GM12878 (cell line): ENCODE measurements at regions of chr9 and their contacts with region 1.

Region 1: GRCh38 chr9:13427587-13427986 is 148.1 kb upstream of the MPDZ start:
- DNase-seq: no peak
- ATAC-seq: 0 out of 3 replicates have a peak, but pooled peaks have one; percentile 35
- H3K4me3 ChIP-seq: no peak overlapping the region
- H3K27ac ChIP-seq: no peak overlapping the region
- H3K4me1 ChIP-seq: no peaks in the 10 kb centered on the region
- H3K27me3 ChIP-seq: no peaks in the 10 kb centered on the region; a peak in 1 of 4 replicates
- CTCF ChIP-seq: peak; percentile 49 to 71 (median 50); a peak in 5 of 6 replicates
- EP300 ChIP-seq: no peak
- POLR2A ChIP-seq: no peak
- RAD21 ChIP-seq: peak; percentile 76

Region 2: GRCh38 chr9:12933957-12934356 is 493.6 kb before region 1 on chr9:
- CTCF ChIA-PET with region 1: no interaction called
- POLR2A ChIA-PET with region 1: no interaction called
- RAD21 ChIA-PET with region 1: no interaction called
- SMC1A ChIA-PET with region 1: no interaction called
- in situ Hi-C with region 1: no loop called
- intact Hi-C with region 1: no loop called
- DNase-seq: no peak
- ATAC-seq: no peak
- H3K4me3 ChIP-seq: no peak overlapping the region
- H3K27ac ChIP-seq: no peak overlapping the region
- H3K4me1 ChIP-seq: no peaks in the 10 kb centered on the region
- H3K27me3 ChIP-seq: no peaks in the 10 kb centered on the region
- CTCF ChIP-seq: no peak
- EP300 ChIP-seq: no peak
- POLR2A ChIP-seq: no peak
- RAD21 ChIP-seq: no peak

Region 3: DNA sequence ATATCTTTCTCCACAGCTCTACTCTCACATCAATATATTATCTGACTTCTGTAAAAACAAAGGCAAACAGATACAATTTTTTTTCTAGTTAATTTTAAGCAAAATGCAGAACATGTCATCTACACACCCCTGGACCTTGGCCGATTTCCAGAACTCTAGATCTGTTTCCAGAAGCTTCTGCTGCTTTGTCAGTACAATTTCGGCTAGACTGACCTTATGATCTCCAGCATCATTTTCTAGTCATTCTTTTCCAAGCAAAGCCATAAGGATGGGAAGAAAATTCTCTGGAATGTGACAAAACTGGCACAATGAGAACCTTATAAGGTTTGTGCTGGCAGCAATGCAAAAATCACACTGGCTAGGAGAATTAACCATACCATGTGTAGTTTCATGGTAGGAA is 15.3 kb before region 1 on chr9:
- CTCF ChIA-PET with region 1: interaction called, 10 read pairs
- POLR2A ChIA-PET with region 1: no interaction called
- RAD21 ChIA-PET with region 1: no interaction called
- SMC1A ChIA-PET with region 1: interaction called, 4 read pairs
- in situ Hi-C with region 1: no loop called
- intact Hi-C with region 1: no loop called
- DNase-seq: no peak
- ATAC-seq: no peak
- H3K4me3 ChIP-seq: no peak overlapping the region
- H3K27ac ChIP-seq: no peak overlapping the region
- H3K4me1 ChIP-seq: no peaks in the 10 kb centered on the region
- H3K27me3 ChIP-seq: no peaks in the 10 kb centered on the region
- CTCF ChIP-seq: no peak
- EP300 ChIP-seq: no peak
- POLR2A ChIP-seq: no peak
- RAD21 ChIP-seq: no peak

Region 4: DNA sequence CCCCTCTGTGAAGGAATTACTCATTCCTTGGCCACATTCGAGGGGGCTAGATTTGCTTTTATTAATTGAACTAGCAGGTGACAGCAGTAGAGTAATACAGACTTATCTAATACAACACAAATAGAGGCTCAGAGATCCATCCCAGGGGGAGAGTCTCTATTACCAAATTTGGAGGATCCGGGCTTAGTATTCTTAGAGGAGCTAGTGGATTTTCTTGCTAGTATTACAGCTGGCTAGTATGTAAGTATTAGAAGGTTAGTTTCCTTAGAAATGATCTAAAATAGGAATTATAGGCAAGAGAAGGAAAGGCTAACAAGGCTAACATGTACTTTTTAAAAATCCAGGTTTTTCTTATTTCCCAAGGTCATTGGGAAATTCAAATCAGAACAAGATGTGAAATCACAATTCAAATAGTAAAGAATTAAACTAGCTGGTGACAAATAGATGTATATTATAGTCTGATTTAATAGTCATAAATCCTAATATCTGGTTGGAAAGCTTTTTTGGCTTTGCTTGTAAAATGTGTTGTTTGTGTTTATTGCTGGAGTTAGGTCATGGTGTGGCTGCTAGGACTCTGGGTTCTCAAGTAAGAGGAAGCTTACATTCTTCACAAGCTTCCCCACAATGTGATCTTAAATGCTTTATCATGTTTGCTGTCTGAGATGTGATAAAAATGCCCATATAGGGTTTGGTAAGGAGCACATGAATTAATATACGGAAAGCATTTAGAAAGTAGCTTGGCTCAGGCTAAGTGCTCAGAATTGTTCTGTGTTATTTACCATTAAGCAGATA is 12.3 kb after region 1 on chr9:
- CTCF ChIA-PET with region 1: interaction called, 30 read pairs
- POLR2A ChIA-PET with region 1: no interaction called
- RAD21 ChIA-PET with region 1: no interaction called
- SMC1A ChIA-PET with region 1: interaction called, 4 read pairs
- in situ Hi-C with region 1: no loop called
- intact Hi-C with region 1: no loop called
- DNase-seq: no peak
- ATAC-seq: no peak
- H3K4me3 ChIP-seq: no peak overlapping the region
- H3K27ac ChIP-seq: no peak overlapping the region
- H3K4me1 ChIP-seq: no peaks in the 10 kb centered on the region
- H3K27me3 ChIP-seq: no peaks in the 10 kb centered on the region
- CTCF ChIP-seq: no peak
- EP300 ChIP-seq: no peak
- POLR2A ChIP-seq: no peak
- RAD21 ChIP-seq: no peak

Region 5: GRCh38 chr9:13450723-13451122 is 23.1 kb after region 1 on chr9:
- CTCF ChIA-PET with region 1: interaction called, 16 read pairs
- POLR2A ChIA-PET with region 1: no interaction called
- RAD21 ChIA-PET with region 1: interaction called, 3 read pairs
- SMC1A ChIA-PET with region 1: no interaction called
- in situ Hi-C with region 1: no loop called
- intact Hi-C with region 1: no loop called
- DNase-seq: peak; percentile 2
- ATAC-seq: peak; percentile 87
- H3K4me3 ChIP-seq: no peak overlapping the region
- H3K27ac ChIP-seq: no peak overlapping the region
- H3K4me1 ChIP-seq: no peaks in the 10 kb centered on the region
- H3K27me3 ChIP-seq: no peaks in the 10 kb centered on the region
- CTCF ChIP-seq: no peak
- EP300 ChIP-seq: peak in 1 of 2 experiments; percentile 23; a peak in 1 of 4 replicates
- POLR2A ChIP-seq: no peak
- RAD21 ChIP-seq: no peak

Region 6: GRCh38 chr9:14428781-14429230 is 1001.2 kb after region 1 on chr9:
- CTCF ChIA-PET with region 1: interaction called, 41 read pairs
- POLR2A ChIA-PET with region 1: no interaction called
- RAD21 ChIA-PET with region 1: interaction called, 9 read pairs
- SMC1A ChIA-PET with region 1: interaction called, 14 read pairs
- in situ Hi-C with region 1: no loop called
- intact Hi-C with region 1: loop called (anchors 1 kb)
- DNase-seq: no peak
- ATAC-seq: peak; percentile 88
- H3K4me3 ChIP-seq: no peak overlapping the region
- H3K27ac ChIP-seq: no peak overlapping the region
- H3K4me1 ChIP-seq: no peaks in the 10 kb centered on the region
- H3K27me3 ChIP-seq: no peaks in the 10 kb centered on the region
- CTCF ChIP-seq: peak; percentile 63 to 72 (median 71)
- EP300 ChIP-seq: no peak
- POLR2A ChIP-seq: no peak
- RAD21 ChIP-seq: peak; percentile 43